Ascending aorta (tissue), 2 donors: ENCODE measurements at regions of chr7 and their contacts with region 1.

Region 1: GRCh38 chr7:13262929-13263530 is 575.6 kb downstream of the ARL4A start:
- DNase-seq: no peak
- H3K4me3 ChIP-seq: no peak overlapping the region
- H3K27ac ChIP-seq: no peak overlapping the region
- H3K4me1 ChIP-seq: no peaks in the 10 kb centered on the region
- H3K27me3 ChIP-seq: no peaks in the 10 kb centered on the region
- CTCF ChIP-seq: peak; percentile 15 to 61 (median 52)

Region 2: GRCh38 chr7:12524794-12525386 is 738.1 kb before region 1 on chr7:
- intact Hi-C with region 1: loop called (anchors 2 kb)
- DNase-seq: no peak
- H3K4me3 ChIP-seq: no peak overlapping the region
- H3K27ac ChIP-seq: no peak overlapping the region
- H3K4me1 ChIP-seq: no peaks in the 10 kb centered on the region
- H3K27me3 ChIP-seq: no peaks in the 10 kb centered on the region
- CTCF ChIP-seq: peak in 2 of 3 experiments; percentile 38 to 59

Region 3: DNA sequence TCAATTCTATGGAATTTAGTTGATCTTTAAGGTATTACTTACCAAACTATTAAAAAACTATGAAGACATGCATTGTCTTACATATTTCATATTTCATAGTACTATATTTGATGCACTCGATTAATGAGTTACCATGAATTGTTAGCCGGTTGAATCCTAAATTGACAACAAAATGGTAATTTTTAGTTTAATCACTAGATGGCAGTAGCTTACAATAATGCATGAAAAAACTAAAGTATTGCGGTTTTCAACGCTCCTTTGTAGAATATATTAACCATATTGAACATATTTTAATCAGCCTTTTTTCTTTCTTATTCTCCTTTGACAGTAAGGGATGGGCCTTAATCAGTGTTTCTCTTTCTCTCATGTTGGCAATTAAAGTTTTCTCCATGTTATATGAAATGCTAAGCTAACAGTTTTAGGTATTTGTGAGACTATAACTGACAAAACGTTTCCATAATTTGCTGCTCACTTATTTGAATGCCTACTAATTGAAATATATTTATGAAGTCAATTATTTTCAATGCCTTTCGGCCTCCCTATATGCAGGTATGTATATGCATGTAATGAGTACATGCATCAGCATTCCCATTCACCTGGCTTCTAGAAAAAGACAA is 624.1 kb before region 1 on chr7:
- intact Hi-C with region 1: loop called (anchors 2 kb)
- DNase-seq: no peak
- H3K4me3 ChIP-seq: no peak overlapping the region
- H3K27ac ChIP-seq: no peak overlapping the region
- H3K4me1 ChIP-seq: no peaks in the 10 kb centered on the region
- H3K27me3 ChIP-seq: no peaks in the 10 kb centered on the region
- CTCF ChIP-seq: peak; percentile 23 to 68 (median 59)

Region 4: GRCh38 chr7:13197501-13197900 is 65.5 kb before region 1 on chr7:
- intact Hi-C with region 1: no loop called
- DNase-seq: no peak
- H3K4me3 ChIP-seq: no peak overlapping the region
- H3K27ac ChIP-seq: no peak overlapping the region
- H3K4me1 ChIP-seq: no peaks in the 10 kb centered on the region
- H3K27me3 ChIP-seq: no peaks in the 10 kb centered on the region
- CTCF ChIP-seq: no peak